Calu3 (cell line): ENCODE measurements at regions of chr7 and their contacts with region 1.

Region 1: GRCh38 chr7:129240119-129240815 is 15.4 kb downstream of the AHCYL2 start:
- DNase-seq: no peak
- H3K4me3 Mint-ChIP-seq: no peak overlapping the region
- H3K27ac Mint-ChIP-seq: no peak overlapping the region
- H3K4me1 Mint-ChIP-seq: no peaks in the 10 kb centered on the region
- H3K27me3 Mint-ChIP-seq: no peaks in the 10 kb centered on the region
- CTCF ChIP-seq: no peak

Region 2: GRCh38 chr7:129285111-129285510 is 44.8 kb after region 1 on chr7:
- CTCF ChIA-PET with region 1: interaction called, 14 read pairs
- intact Hi-C with region 1: no loop called
- DNase-seq: no peak
- H3K4me3 Mint-ChIP-seq: no peak overlapping the region
- H3K27ac Mint-ChIP-seq: no peak overlapping the region
- H3K4me1 Mint-ChIP-seq: peaks cover 27% of the 10 kb centered on the region
- H3K27me3 Mint-ChIP-seq: no peaks in the 10 kb centered on the region
- CTCF ChIP-seq: no peak